A549 (cell line): ENCODE measurements at regions of chr9 and their contacts with region 1.

Region 1: DNA sequence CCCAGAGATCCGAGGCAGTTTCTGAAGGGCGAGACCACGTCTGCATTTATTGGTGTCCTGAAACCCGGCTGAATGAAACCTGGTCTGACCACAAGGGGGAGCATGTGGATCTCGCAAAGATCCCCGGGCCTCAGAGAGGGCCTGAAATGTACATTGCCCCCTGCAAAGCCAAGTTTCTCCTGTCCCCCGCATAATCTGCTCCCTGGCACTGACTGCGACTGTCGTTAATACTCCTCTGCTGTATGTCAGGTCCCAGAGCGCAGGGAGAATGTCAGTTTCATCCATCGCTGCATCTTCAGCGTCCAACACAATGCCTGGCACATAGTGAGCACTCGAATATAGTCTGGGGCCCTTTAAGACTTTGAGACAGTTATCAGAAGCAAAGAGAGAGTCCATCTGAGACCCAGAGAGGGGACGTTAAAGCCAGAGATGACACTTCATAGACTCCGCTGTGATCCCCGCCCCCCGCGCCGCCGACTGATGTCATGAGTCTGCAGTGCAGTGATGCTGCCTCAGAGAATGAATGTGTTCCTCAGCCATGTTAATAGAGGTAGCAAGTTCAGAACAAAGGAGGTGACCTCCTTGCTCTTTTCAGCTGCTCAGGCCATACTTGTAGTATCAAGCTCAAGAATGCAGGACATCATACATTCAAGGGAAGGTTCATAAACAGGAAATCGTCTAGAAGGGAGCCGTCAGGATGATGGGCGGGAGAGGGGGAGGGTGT is 74.5 kb upstream of the BARHL1 start:
- DNase-seq: peak; percentile 69 to 95
- ATAC-seq: peak; percentile 80 to 93
- H3K4me3 ChIP-seq: no peak overlapping the region
- H3K27ac ChIP-seq: no peak overlapping the region
- H3K4me1 ChIP-seq: no peaks in the 10 kb centered on the region
- CTCF ChIP-seq: peak; percentile 81
- EP300 ChIP-seq: no peak
- POLR2A ChIP-seq: no peak
- RAD21 ChIP-seq: peak; percentile 82 to 86

Region 2: DNA sequence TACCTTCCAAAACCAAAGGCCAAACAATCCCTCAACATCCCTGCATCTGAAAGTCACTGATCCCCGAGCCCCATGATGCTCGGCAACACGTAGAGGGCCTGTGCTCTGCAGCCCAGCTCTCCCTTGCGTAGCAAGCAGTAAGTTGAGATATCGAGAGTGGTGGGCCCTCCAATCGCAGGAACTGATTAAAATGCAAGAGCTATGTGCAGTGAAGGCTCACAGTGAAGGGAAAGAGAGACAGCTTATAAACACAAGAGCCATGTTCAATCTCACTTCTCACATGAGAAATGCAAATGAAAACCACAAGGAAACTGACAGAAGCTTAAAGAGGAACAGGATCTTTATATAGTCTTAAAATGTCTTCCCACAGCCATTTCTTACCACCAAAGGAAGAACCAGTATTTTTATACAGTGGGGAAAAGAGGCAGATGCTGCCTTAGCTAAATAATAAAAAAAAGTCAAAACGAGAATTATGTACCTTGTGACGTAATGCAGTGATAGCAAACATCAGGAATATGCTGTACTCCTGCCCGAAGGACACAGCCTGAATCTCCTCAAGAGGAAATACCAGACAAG is 125.9 kb before region 1 on chr9:
- CTCF ChIA-PET with region 1: no interaction called
- POLR2A ChIA-PET with region 1: no interaction called
- DNase-seq: no peak
- ATAC-seq: no peak
- H3K4me3 ChIP-seq: no peak overlapping the region
- H3K27ac ChIP-seq: no peak overlapping the region
- H3K4me1 ChIP-seq: no peaks in the 10 kb centered on the region
- CTCF ChIP-seq: no peak
- EP300 ChIP-seq: no peak
- POLR2A ChIP-seq: no peak
- RAD21 ChIP-seq: no peak

Region 3: GRCh38 chr9:132487351-132487791 is 20.5 kb before region 1 on chr9:
- CTCF ChIA-PET with region 1: interaction called, 15 read pairs
- POLR2A ChIA-PET with region 1: no interaction called
- DNase-seq: no peak
- ATAC-seq: no peak
- H3K4me3 ChIP-seq: no peak overlapping the region
- H3K27ac ChIP-seq: no peak overlapping the region
- H3K4me1 ChIP-seq: no peaks in the 10 kb centered on the region
- CTCF ChIP-seq: no peak
- EP300 ChIP-seq: no peak
- POLR2A ChIP-seq: no peak
- RAD21 ChIP-seq: no peak

Region 4: GRCh38 chr9:132525308-132525707 is 17.4 kb after region 1 on chr9:
- CTCF ChIA-PET with region 1: interaction called, 23 read pairs
- POLR2A ChIA-PET with region 1: no interaction called
- DNase-seq: no peak
- ATAC-seq: no peak
- H3K4me3 ChIP-seq: no peak overlapping the region
- H3K27ac ChIP-seq: no peak overlapping the region
- H3K4me1 ChIP-seq: no peaks in the 10 kb centered on the region
- CTCF ChIP-seq: no peak
- EP300 ChIP-seq: no peak
- POLR2A ChIP-seq: no peak
- RAD21 ChIP-seq: no peak

Region 5: DNA sequence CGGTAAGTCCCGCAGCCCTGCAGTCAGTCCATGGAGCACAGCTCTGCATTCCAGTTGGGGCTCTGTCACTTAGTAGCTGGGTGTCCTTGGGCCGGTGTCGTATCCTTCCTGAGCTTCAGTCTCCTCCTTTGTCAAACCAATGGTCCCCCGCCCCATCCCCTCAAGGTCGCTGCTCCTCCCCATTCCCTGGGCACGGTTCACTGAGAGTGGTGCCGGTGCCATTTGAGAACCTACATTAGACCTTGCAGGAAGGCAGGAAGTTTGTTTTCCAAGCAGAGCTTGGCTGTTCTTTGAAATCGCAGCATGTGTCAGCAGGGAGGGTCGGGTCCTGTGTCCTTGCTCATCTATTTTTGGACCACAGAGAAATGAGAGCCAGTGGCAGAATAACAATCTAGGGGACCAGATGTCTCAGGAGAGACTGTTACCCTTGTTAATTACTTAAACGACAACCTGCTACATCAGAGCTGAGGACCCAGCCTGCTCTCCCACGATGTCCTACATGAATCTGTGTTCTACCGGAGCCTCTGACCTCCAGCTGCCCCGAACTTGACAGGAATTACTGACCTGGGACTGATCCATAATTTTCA is 52.8 kb after region 1 on chr9:
- CTCF ChIA-PET with region 1: interaction called, 11 read pairs
- POLR2A ChIA-PET with region 1: no interaction called
- DNase-seq: no peak
- ATAC-seq: no peak; a peak in 1 of 6 replicates
- H3K4me3 ChIP-seq: no peak overlapping the region
- H3K27ac ChIP-seq: no peak overlapping the region
- H3K4me1 ChIP-seq: no peaks in the 10 kb centered on the region
- CTCF ChIP-seq: no peak
- EP300 ChIP-seq: no peak
- POLR2A ChIP-seq: no peak
- RAD21 ChIP-seq: no peak

Region 6: DNA sequence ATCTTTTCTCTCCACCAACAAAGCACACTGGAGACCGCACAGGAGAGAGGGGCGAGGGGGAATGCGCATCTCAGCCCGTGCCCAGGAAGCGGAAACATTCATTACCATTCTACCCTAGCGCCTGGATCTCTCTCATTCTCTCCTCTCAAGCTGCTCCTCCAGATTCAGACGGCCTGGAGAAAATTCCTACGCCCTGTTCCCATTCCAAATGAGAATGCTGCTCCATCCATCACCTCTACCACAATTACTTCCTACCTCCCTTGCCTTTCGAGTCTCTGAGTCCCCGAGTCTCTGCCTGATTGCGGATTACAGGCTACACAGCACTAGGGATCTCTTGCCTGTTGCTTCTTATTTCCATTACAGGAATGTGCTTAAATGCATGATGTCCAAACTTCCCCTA is 155.2 kb after region 1 on chr9:
- CTCF ChIA-PET with region 1: no interaction called
- POLR2A ChIA-PET with region 1: no interaction called
- DNase-seq: no peak
- ATAC-seq: no peak
- H3K4me3 ChIP-seq: no peak overlapping the region
- H3K27ac ChIP-seq: no peak overlapping the region
- H3K4me1 ChIP-seq: peaks cover 2% of the 10 kb centered on the region; the same call in 1 of the 3 replicates
- CTCF ChIP-seq: no peak
- EP300 ChIP-seq: no peak
- POLR2A ChIP-seq: no peak
- RAD21 ChIP-seq: no peak

Region 7: DNA sequence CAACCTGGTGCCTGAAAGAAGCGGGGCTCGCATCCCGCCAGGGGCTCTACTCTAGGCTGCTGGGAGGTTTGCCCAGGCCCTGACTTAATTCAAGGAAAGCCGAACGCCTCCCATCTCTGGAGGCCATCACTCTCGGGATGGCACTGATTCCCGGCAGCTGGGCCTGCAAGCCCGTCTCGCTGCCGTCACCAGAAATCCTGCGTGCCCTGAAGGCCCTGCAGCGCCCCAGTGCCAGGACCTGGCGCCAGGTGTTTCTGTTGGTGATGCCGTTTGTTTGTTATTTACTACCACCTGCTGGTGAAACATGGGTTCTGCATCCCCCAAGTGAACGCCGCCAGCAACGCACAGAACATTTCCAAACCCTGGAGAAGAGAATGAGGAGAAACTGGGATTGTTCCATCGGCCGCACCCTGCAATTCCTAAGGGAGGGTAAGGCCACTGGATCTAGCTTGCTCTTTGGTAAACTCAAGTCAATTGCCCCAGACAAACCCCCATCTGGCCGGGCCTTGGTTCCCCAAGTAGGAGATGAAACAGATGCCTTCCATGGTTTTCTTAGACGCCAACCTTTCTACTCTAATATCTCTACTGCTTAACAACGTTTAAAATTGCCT is 292.2 kb after region 1 on chr9:
- CTCF ChIA-PET with region 1: interaction called, 12 read pairs
- POLR2A ChIA-PET with region 1: no interaction called
- DNase-seq: peak; percentile 51 to 81
- ATAC-seq: peak; percentile 82 to 92
- H3K4me3 ChIP-seq: no peak overlapping the region
- H3K27ac ChIP-seq: no peak overlapping the region
- H3K4me1 ChIP-seq: 0 out of 3 replicates have a peak, but pooled peaks cover 3% of the 10 kb centered on the region
- CTCF ChIP-seq: peak; percentile 83
- EP300 ChIP-seq: no peak
- POLR2A ChIP-seq: no peak
- RAD21 ChIP-seq: peak; percentile 91 to 93